Posterior cingulate gyrus (tissue), 11 donors: ENCODE measurements at regions of chr7 and their contacts with region 1.

Region 1: GRCh38 chr7:100469227-100470044 is 5.4 kb upstream of the SPACDR start:
- DNase-seq: peak; percentile 79 to 98 (median 94)

Region 2: DNA sequence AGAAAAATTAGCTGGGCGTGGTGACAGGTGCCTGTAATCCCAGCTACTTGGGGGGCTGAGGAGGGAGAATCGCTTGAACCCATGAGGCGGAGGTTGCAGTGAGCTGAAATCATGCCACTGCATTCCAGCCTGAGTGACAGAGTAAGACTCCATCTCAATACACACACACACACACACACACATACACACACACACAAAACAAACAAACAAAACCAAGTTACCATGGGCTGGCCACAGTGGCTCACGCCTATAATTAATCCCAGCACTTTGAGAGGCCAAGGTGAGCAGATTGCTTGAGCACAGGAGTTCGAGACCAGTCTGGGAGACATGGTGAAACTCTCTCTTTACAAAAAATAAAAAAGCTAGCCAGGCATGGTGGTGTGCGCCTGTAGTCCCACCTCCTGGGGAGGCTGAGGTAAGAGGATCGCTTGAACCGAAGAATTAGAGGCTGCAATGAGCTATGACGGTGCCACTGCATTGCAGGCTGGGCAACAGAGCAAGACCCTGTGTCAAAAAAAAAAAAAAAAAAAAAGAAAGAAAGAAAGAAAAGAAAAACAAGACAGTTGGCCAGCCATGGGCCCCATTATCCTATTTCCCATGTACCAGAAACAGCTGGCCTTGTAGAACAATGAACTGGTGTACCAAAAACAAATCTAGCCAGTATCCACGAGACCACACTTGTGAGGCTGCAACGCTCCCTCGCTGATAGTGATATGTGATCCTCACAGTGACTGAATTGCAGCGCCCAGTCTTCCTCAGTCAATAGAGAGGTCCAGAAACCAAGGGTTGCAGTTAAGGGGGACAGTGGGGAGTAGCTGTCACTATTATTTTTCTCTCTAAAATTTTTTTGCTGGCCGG is 63.0 kb after region 1 on chr7:
- intact Hi-C with region 1: no loop called
- DNase-seq: no peak

Region 3: DNA sequence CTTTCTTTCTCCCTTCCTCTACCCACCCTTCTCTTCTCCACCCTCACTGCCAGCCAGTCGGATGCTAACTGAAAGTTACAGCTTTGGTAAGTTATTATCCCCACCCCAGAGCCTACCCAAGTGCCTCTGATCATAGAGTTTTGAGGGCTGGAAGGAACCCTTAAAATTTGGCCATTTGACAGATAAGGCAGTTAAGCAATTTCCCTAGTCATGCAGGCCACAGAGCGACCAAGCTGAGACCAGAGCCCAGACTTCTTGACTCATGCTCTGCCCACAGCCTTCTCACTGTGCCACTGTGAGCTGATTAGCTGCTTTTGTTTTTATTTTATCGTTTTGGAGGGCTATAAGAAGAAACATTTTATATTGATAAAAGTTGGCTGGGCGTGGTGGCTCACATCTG is 87.1 kb after region 1 on chr7:
- intact Hi-C with region 1: loop called (anchors 1 kb)
- DNase-seq: no peak

Region 4: DNA sequence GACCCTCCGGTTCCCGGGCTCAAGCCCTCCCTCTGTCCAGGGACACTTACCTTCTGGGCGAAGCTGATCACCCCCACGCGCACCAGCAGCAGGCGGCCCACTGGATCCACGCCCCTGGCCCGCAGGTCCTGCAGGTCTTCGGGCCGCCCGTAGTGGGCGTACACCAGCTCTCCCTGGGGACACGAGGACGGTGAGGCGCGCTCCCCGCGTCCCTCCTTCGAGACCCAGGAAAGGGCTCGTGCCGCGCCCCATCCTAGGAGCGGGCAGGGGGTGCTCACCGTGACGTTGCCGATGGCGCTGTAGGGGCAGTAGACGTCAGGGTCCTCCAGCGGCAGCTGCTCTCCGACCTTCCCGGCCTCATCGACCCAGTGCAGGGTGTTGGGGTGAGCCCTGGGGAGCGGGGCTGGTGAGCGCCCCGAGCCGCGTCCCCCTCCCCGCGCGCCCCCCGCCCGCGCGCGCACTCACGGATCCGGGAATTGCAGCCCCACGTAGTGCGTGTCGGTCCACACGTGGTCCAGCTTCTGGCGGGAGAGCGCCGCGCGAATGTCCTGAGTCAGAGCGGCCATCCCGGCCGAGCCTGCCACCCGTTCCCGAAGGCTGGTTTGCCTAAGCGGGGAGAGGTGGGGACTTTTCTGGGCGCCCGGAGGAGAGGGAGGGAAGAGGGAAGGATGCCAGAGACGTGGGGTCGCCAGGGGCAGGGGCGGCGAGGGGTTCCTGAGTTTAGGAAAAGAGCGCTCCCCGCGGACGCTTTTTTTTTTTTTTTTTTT is 163.7 kb after region 1 on chr7:
- intact Hi-C with region 1: no loop called
- DNase-seq: peak in 7 of 10 donors; percentile 24 to 91 (median 58)

Region 5: DNA sequence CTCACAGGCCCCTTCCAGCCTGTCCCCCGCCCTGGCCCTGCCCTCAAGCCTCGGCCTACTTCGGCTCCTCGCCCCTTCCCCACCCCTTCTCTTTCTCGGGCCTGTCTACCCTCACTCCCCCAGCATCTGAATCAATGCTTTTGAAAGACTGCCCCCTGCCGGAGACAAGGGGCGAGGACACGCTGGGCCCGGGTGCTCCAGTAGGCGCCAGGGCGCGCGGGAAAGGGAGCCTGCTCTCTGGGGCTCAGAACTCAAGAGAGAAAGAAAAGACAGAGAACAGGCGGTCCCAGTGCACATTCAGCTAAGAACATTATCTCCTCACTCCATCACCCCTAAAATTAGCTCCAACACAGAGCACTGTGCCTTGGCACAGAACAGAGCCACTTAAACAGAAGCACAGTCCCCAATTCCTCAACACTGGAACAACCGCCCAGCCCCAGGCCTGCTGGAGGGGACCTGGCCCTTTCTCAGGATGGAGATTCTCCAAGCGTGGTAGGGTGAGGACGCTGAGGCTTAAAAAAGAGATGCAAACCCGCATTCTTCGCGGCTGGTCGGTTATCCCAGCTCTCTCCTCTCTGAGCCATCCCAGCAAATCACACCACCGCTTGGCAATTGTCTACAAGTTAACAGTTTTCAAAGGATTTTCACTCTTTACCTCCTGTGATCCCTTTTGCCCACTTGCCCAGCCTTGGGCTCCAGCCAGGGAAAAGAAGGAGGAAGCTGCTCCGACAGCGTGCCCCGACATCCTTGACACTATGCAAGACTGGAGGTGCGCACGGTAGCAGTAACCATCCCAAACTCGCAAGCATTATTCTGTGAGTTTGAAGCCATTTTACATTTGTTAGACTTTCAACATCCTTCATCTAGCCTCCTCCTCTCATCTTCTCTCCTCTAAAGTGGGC is 222.5 kb after region 1 on chr7:
- intact Hi-C with region 1: loop called (anchors 5 kb)
- DNase-seq: peak; percentile 67 to 97 (median 85)

Region 6: DNA sequence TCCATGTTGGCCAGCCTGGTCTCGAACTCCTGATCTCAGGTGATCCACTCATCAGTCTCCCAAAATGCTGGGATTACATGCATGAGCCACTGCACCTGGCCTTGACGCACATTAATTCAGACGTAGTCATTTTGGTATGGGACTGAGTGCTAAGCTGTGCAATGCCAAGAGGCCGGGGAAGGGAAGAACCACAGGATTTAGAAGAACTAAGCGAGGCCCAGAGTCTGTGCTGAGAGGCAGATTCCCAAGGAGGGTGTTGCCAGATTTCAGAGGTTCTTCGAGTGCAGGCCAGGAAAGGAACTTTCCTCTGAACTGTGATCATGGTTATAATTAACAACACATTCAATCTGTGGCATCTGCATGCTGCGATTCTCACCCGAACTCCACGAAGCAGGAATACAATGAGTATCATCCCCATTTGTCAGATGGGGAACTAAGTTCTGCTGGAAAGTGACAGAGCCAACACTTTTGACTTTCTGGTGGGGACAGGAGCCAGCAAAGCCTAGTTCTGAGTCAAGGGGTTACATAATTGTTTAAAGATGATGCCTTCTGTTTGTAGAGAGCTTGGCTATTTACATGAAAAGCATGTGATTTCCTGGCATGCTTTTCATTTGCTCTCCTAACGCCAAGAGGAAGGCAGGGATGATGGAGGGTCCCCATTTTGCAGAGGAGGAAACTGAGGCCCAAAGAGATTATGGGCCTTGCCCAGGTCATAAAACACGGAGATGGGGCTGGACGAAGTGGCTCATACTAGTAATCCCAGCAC is 257.7 kb after region 1 on chr7:
- intact Hi-C with region 1: loop called (anchors 5 kb)
- DNase-seq: no peak